Lower leg skin (tissue), 4 donors: ENCODE measurements at regions of chr4 and their contacts with region 1.

Region 1: GRCh38 chr4:148495471-148495870 is 53.3 kb upstream of the NR3C2 start:
- DNase-seq: no peak
- H3K4me3 ChIP-seq: no peak overlapping the region
- CTCF ChIP-seq: no peak
- POLR2A ChIP-seq: no peak

Region 2: DNA sequence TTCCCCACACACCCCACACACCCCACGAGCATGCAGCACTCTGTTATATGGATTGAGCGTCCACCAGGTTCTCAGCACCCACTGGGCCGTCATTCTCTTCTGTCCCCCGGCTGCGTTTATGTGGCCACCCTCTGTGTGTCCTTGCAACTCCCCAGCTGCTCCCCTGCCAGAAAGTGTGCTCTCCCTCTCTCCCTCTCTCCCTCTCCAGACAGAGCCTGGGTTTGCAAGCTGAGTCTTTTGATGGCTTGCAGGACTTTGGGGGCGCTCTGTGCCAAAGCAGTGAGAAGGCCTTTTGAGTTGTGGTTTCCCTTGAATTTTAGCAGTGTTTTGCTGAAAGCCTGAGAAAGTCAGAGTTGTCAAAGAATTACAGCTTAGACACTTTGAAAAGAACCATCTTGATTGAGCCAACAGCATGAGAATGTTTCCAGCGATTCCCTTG is 1756.3 kb after region 1 on chr4:
- intact Hi-C with region 1: loop called (anchors 5 kb)
- DNase-seq: no peak
- H3K4me3 ChIP-seq: no peak overlapping the region
- CTCF ChIP-seq: no peak
- POLR2A ChIP-seq: no peak